ENCODE measurements at regions of chr3 and their contacts with region 1.

Region 1: GRCh38 chr3:179015551-179016020 is 56.0 kb downstream of the ZMAT3 start:
- DNase-seq: no peak
- ATAC-seq: peak; percentile 65 to 83
- H3K4me3 ChIP-seq: no peak overlapping the region
- H3K27ac ChIP-seq: no peak overlapping the region
- H3K4me1 ChIP-seq: peaks cover 0 to 10% of the 10 kb centered on the region in 2 donors
- H3K27me3 ChIP-seq: no peaks in the 10 kb centered on the region
- CTCF ChIP-seq: peak; percentile 62 to 82 (median 74)
- POLR2A ChIP-seq: no peak

Region 2: DNA sequence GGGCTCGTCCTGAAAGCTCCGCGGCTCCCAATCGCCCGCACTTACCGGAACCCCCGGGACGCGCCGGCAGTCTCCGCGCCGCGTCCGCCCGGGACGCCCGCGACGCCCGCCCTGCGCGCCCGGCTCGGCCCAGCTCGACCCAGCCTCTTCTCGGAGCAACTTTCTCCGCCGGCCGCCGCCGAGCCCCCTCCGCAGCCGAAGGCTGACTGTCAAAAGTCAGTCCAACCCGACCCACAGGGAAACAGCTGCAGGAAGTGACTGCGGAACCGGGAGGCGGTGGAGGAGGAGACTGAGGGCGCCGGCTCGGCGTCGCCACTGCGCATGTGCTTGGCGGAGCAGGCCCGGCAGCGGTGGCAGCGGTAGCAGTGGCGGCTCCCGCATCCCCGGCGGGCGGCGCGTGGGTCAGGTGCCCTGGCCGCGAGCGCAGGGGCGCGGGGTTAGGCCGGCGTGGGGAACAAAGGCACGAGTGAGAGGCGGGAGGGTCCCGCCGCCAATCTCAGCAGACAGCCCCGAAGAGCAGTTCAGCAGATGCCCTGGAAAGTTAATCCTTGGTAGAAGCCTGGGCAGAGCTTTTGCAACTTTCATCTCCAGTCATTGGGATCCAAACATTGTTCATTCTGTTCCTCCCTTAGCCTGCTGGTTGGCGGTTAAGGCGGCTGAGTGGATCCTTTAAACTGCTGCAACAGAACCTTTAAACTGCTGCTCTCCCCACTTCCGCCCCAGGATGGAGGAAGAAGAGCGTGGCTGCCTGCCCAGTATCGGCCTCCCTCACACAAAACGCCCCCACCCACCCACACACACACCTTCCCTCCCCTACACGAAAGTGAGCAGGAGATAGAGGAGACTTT is 56.2 kb after region 1 on chr3 and contains the start of gene ZMAT3:
- in situ Hi-C with region 1: no loop called
- intact Hi-C with region 1: loop called (anchors 5 kb)
- DNase-seq: peak; percentile 73 to 79
- ATAC-seq: peak; percentile 92 to 95
- H3K4me3 ChIP-seq: peak within 1 kb of the TSS; percentile 63 to 82 (median 70)
- H3K27ac ChIP-seq: peak within 1 kb of the TSS; percentile 76 to 92 (median 84)
- H3K4me1 ChIP-seq: peaks cover 5 to 6% of the 10 kb centered on the region in 2 donors
- H3K27me3 ChIP-seq: no peaks in the 10 kb centered on the region
- CTCF ChIP-seq: no peak
- POLR2A ChIP-seq: peak; percentile 66 to 70
- total RNA-seq, gene ZMAT3: 3.8 to 9.7 (median 7.3) TPM

Region 3: GRCh38 chr3:179105881-179106280 is 90.3 kb after region 1 on chr3:
- in situ Hi-C with region 1: no loop called
- intact Hi-C with region 1: loop called (anchors 1 kb)
- DNase-seq: no peak
- ATAC-seq: no peak
- H3K4me3 ChIP-seq: no peak overlapping the region
- H3K27ac ChIP-seq: no peak overlapping the region
- H3K4me1 ChIP-seq: no peaks in the 10 kb centered on the region
- H3K27me3 ChIP-seq: no peaks in the 10 kb centered on the region
- CTCF ChIP-seq: no peak
- POLR2A ChIP-seq: no peak

Measured in gastrocnemius medialis (tissue), 4 donors.